ENCODE measurements at regions of chr12 and their contacts with region 1.

Region 1: DNA sequence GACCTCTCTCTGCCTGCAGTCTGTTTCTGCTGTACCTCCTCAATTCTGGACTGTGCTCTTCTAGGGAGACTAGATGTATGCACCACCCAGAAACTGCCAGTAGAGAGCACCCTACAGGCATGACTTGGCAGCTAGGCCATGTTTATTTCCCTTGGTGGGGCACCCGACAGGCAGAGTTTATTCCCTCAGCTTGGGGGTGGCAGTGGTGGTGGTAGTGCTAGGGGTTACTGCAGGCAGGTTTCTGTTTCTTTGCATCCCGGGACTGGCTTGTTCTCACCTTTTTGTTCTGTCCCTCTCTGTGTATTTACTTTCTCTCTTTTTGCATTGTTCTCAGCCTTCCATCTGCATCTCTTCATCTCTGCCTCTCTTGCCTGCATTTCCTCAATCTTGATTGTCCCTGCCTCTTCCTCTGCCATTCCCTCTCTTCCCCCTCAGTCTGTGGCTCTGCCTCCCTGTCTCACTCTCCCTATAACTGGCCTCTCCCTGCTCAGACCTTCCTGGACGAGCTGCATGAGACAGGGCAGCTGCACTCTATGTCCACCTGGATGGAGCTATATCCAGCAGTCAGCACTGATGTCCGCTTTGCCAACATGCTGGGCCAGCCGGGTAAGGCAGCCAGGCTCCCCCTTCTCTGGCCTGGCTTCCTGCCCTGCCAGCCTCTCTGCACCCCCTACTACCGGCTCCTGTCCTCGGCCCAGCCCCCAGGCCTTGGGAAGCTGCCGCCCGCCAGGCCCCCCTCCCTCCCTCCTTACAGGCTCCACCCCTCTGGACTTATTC is 13.8 kb downstream of the PRPF40B start:
- H3K4me3 ChIP-seq: no peak overlapping the region
- H3K27ac ChIP-seq: no peak overlapping the region
- H3K4me1 ChIP-seq: no peaks in the 10 kb centered on the region; the same call in 1 of the 2 replicates
- CTCF ChIP-seq: peak; percentile 79

Region 2: GRCh38 chr12:49623142-49623904 is 13.8 kb before region 1 on chr12 and contains the start of gene PRPF40B:
- CTCF ChIA-PET with region 1: interaction called, 20 read pairs
- POLR2A ChIA-PET with region 1: interaction called, 4 read pairs
- H3K4me3 ChIP-seq: peak within 1 kb of the TSS; percentile 49
- H3K27ac ChIP-seq: peak within 1 kb of the TSS; percentile 1
- H3K4me1 ChIP-seq: no peaks in the 10 kb centered on the region
- CTCF ChIP-seq: peak; percentile 22; the same call in 1 of the 2 replicates

Measured in HEK293 (cell line).